CD4-positive, alpha-beta memory T cell (primary cell): ENCODE measurements at regions of chr6 and their contacts with region 1.

Region 1: DNA sequence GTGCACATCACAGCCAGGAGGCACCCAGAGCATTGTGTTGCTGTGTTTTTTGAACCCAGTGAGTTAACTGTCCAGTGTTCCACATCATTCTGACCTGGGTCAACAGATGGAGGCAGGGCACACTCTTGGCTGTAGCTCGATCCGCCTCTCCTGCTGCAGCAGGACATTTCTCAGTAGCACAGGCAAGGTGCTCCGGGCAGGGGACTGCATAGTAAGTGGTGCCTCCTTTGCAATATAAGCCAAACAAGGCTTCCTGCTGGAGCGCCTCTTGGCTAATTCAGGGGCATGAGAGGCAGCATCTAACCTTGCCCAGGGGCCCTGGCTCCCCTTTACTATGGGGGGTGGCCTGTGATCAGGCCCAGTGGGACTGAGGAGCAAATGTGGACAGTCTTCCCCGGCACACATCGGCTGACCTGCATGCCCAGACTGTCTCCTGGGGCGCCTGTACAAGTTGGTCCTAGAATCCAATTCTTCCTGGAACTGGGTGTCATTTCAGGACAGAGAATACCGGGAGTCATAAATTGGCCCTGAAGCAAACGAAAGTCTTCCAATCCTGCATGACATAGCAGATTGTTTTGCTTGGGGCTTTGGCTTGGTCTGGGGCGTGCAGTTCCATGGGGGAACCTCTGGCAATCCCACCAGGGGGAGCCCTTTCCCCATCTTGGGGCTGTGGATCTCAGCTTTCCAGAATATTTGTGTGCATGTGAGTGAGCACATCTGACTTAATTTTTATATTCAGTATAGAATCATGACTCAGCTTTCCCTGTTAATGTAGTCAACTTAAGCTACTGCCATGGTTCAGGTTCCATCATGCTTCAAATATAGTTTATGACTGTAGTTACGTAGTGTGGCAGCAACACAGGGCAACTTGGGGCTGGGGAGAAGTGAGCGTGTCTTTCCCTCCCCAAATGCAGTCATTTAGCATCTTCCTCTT is 56.0 kb upstream of the DDR1 start:
- DNase-seq: peak; percentile 71 to 77 (median 73)
- H3K4me3 ChIP-seq: peak overlapping the region; percentile 68 to 88
- H3K4me3 Mint-ChIP-seq: peak overlapping the region; percentile 91 to 98 (median 94)
- H3K27ac ChIP-seq: peak overlapping the region; percentile 70
- H3K27ac Mint-ChIP-seq: peak overlapping the region; percentile 72 to 99 (median 95)
- H3K4me1 ChIP-seq: peaks cover 78% of the 10 kb centered on the region
- H3K4me1 Mint-ChIP-seq: peaks cover 56 to 93% (median 72%) of the 10 kb centered on the region in 4 donors
- H3K27me3 ChIP-seq: no peaks in the 10 kb centered on the region
- H3K27me3 Mint-ChIP-seq: no peaks in the 10 kb centered on the region

Region 2: GRCh38 chr6:28929887-28930620 is 1898.2 kb before region 1 on chr6:
- CTCF ChIA-PET with region 1: no interaction called
- POLR2A ChIA-PET with region 1: no interaction called
- intact Hi-C with region 1: no loop called
- DNase-seq: no peak
- H3K4me3 ChIP-seq: no peak overlapping the region
- H3K4me3 Mint-ChIP-seq: no peak overlapping the region
- H3K27ac ChIP-seq: no peak overlapping the region
- H3K27ac Mint-ChIP-seq: peak overlapping the region in 2 of 7 donors; percentile 43 to 81
- H3K4me1 ChIP-seq: peaks cover 6% of the 10 kb centered on the region
- H3K4me1 Mint-ChIP-seq: peaks cover 0 to 3% (median under 1%) of the 10 kb centered on the region in 4 donors
- H3K27me3 ChIP-seq: peaks cover 6% of the 10 kb centered on the region
- H3K27me3 Mint-ChIP-seq: peaks cover 3 to 6% of the 10 kb centered on the region in 2 donors

Region 3: DNA sequence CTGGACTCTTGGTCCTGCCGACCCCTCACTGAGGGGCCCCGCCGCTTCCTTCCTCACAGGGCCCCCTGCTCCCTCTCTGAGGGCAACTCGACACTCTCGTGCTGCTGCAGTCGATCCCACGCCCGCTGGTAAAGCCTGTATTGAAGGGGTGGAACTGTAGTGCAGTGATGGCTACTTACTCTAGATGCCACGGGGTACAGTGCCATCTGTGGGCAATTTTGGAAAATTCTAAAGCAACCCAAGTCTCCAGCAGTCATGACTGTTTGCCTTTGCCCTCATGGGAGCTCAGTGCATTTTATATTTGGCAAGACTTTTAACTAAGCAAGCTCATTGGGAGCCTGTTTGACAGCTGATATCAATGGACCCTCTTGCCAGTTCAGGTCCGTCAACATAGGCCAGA is 187.8 kb before region 1 on chr6:
- CTCF ChIA-PET with region 1: no interaction called
- POLR2A ChIA-PET with region 1: no interaction called
- intact Hi-C with region 1: no loop called
- DNase-seq: no peak
- H3K4me3 ChIP-seq: no peak overlapping the region
- H3K4me3 Mint-ChIP-seq: no peak overlapping the region
- H3K27ac ChIP-seq: no peak overlapping the region
- H3K27ac Mint-ChIP-seq: no peak overlapping the region
- H3K4me1 ChIP-seq: no peaks in the 10 kb centered on the region
- H3K4me1 Mint-ChIP-seq: peaks cover 0 to 8% (median 5%) of the 10 kb centered on the region in 4 donors
- H3K27me3 ChIP-seq: no peaks in the 10 kb centered on the region
- H3K27me3 Mint-ChIP-seq: no peaks in the 10 kb centered on the region

Region 4: GRCh38 chr6:30742316-30743098 is 85.8 kb before region 1 on chr6 and contains the start of gene FLOT1:
- CTCF ChIA-PET with region 1: interaction called, 9 read pairs
- POLR2A ChIA-PET with region 1: interaction called, 19 read pairs
- intact Hi-C with region 1: loop called (anchors 1 kb)
- DNase-seq: peak; percentile 67 to 88 (median 68)
- H3K4me3 ChIP-seq: peak within 1 kb of the TSS; percentile 50 to 64
- H3K4me3 Mint-ChIP-seq: peak within 1 kb of the TSS; percentile 87 to 97 (median 91)
- H3K27ac ChIP-seq: peak within 1 kb of the TSS; percentile 63
- H3K27ac Mint-ChIP-seq: peak within 1 kb of the TSS; percentile 84 to 98 (median 93)
- H3K4me1 ChIP-seq: peaks cover 54% of the 10 kb centered on the region
- H3K4me1 Mint-ChIP-seq: peaks cover 44 to 75% (median 59%) of the 10 kb centered on the region in 4 donors
- H3K27me3 ChIP-seq: no peaks in the 10 kb centered on the region
- H3K27me3 Mint-ChIP-seq: no peaks in the 10 kb centered on the region
- total RNA-seq, gene FLOT1: 75.3 to 78.5 TPM

Region 5: DNA sequence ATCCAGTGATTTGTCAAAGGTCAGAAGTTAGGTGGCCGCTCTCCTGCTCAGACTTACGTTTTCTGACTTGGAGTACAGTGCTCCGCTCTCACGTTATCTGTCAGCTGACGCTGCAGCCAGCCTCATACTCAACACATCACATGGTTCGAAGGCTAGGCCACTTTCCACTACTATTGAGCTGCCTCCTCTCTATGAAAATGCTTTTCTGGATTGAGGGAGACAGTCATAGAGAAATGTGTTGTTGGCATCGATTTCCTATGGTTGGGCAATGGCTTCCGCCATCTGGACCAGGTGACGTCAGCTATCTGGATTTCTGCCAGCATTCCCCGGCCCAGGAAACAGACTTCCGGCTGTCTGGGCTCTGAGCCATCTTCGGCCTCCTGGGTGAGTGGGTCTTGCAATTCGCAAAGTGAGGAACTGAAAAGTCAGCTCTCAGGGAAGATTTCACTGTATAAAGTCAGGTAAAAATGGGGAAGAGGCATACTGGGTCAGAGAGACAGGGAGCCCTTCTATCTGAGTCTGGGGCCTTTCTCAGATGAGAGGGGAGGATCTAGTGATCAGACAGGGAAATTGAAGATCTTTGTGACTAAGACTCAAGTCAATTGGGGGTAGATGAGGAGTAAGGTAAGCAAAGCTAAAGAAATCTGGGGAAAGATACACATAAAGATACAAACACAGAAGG is 46.4 kb before region 1 on chr6:
- CTCF ChIA-PET with region 1: no interaction called
- POLR2A ChIA-PET with region 1: no interaction called
- intact Hi-C with region 1: no loop called
- DNase-seq: no peak
- H3K4me3 ChIP-seq: no peak overlapping the region
- H3K4me3 Mint-ChIP-seq: no peak overlapping the region
- H3K27ac ChIP-seq: no peak overlapping the region
- H3K27ac Mint-ChIP-seq: peak overlapping the region in 1 of 7 donors; percentile 89
- H3K4me1 ChIP-seq: peaks cover 11% of the 10 kb centered on the region
- H3K4me1 Mint-ChIP-seq: peaks cover 12 to 23% (median 20%) of the 10 kb centered on the region in 4 donors
- H3K27me3 ChIP-seq: no peaks in the 10 kb centered on the region
- H3K27me3 Mint-ChIP-seq: no peaks in the 10 kb centered on the region

Region 6: GRCh38 chr6:30793521-30794194 is 34.6 kb before region 1 on chr6:
- CTCF ChIA-PET with region 1: interaction called, 8 read pairs
- POLR2A ChIA-PET with region 1: interaction called, 12 read pairs
- intact Hi-C with region 1: no loop called
- DNase-seq: peak in 4 of 5 donors; percentile 51 to 62 (median 55)
- H3K4me3 ChIP-seq: peak overlapping the region in 1 of 2 donors; percentile 11
- H3K4me3 Mint-ChIP-seq: peak overlapping the region; percentile 43 to 79 (median 74)
- H3K27ac ChIP-seq: peak overlapping the region; percentile 40
- H3K27ac Mint-ChIP-seq: peak overlapping the region; percentile 88 to 97 (median 95)
- H3K4me1 ChIP-seq: peaks cover 41% of the 10 kb centered on the region
- H3K4me1 Mint-ChIP-seq: peaks cover 37 to 70% (median 49%) of the 10 kb centered on the region in 4 donors
- H3K27me3 ChIP-seq: no peaks in the 10 kb centered on the region
- H3K27me3 Mint-ChIP-seq: peaks cover 0 to 2% of the 10 kb centered on the region in 2 donors

Region 7: DNA sequence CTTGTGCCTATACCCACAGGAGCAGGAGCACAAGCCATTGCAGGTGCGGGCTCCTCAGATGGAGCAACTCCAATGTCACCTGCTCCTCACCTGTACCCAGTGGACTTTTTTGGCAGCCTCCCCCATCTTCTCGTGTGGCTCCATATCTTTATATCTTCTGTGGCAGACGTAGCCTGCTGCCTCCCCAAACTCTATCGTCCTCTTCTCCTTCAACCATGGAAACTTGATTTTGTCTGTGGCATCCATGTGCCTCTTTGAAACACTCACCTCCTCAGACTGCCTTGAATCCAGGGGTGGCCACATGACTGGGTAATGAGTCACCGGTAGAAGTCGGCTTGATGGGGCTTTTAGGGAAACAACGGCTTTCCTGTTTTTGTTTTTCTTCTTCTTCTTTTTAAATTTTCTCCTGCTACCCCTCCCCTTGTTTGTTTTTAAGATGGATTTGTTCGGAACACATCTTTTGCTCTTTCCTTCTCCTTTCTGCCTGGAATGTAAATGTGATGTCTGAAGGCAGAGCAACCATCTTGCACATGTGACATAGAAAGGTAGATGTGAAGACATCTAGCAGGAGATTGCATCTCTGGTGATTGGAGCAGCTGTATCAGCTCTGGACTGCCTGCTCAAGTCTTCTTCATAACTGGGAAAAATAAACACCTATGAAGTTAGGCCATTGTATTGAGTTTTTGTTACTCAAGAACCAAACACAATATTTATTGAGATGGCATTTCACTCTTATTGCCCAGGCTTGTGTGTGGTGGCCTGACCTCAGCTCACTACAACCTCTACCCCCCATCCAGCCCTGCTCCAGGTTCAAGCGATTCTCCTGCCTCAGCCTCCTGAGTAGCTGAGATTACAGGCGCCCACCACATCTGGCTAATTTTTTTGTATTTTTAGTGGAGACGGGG is 13.9 kb before region 1 on chr6:
- CTCF ChIA-PET with region 1: interaction called, 39 read pairs
- POLR2A ChIA-PET with region 1: interaction called, 6 read pairs
- intact Hi-C with region 1: no loop called
- DNase-seq: peak in 1 of 5 donors; percentile 70
- H3K4me3 ChIP-seq: no peak overlapping the region
- H3K4me3 Mint-ChIP-seq: peak overlapping the region in 7 of 8 donors; percentile 29 to 69 (median 56)
- H3K27ac ChIP-seq: no peak overlapping the region
- H3K27ac Mint-ChIP-seq: peak overlapping the region; percentile 7 to 92 (median 75)
- H3K4me1 ChIP-seq: peaks cover 58% of the 10 kb centered on the region
- H3K4me1 Mint-ChIP-seq: peaks cover 50 to 80% (median 65%) of the 10 kb centered on the region in 4 donors
- H3K27me3 ChIP-seq: no peaks in the 10 kb centered on the region
- H3K27me3 Mint-ChIP-seq: no peaks in the 10 kb centered on the region

Region 8: DNA sequence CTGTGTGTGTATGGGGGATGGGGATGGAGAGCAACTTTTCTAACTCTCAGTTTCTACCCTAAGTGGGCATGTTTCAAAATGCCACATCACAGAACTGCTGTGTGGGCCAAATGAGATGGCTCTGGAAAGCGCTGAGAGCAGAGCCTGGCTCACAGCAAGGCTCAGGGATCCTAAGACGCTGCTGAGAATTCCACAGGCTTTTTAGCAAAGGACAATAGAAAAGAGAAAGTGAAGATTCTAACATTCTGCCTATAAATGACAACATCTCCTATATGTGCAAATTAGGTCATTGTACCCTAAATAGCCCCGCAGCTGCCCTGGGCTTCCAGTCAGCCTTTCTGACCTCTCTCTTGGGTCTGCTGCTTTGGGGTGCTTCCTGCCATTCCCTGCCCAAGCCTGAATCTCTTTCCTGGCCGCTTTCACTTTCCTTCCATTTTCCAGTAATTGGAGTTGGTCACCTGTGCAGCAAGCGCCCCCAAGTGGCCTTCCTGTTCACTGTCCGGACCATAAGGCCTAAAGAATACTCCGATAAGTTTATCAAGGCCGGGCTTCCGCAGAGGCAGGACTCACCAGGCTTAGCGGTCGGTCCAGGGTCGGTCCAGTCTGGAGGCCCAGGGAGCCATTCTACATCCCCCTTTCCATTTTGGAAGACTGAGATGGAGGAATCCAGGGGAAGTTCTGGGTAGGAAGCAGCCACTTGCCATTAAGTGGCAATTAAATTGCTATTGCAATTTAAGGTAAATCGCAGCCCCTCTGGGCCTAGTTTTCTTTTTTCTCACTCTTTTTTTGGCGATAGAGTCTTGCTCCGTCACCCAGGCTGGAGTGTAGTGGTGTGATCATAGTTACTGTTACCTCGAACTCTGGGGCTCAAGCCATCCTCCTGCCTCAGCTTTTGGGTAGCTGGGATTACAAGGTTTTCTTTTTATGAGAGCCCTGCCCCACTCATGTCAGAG is 49.4 kb after region 1 on chr6:
- CTCF ChIA-PET with region 1: interaction called, 262 read pairs
- POLR2A ChIA-PET with region 1: interaction called, 35 read pairs
- intact Hi-C with region 1: loop called (anchors 1 kb)
- DNase-seq: peak; percentile 62 to 71 (median 68)
- H3K4me3 ChIP-seq: peak overlapping the region; percentile 40 to 43
- H3K4me3 Mint-ChIP-seq: peak overlapping the region; percentile 61 to 91 (median 82)
- H3K27ac ChIP-seq: no peak overlapping the region
- H3K27ac Mint-ChIP-seq: peak overlapping the region in 6 of 7 donors; percentile 21 to 91 (median 72)
- H3K4me1 ChIP-seq: peaks cover 10% of the 10 kb centered on the region
- H3K4me1 Mint-ChIP-seq: peaks cover 7 to 27% (median 11%) of the 10 kb centered on the region in 4 donors
- H3K27me3 ChIP-seq: no peaks in the 10 kb centered on the region
- H3K27me3 Mint-ChIP-seq: no peaks in the 10 kb centered on the region

Region 9: GRCh38 chr6:30914076-30914853 is 86.0 kb after region 1 on chr6 and contains the start of gene VARS2:
- CTCF ChIA-PET with region 1: interaction called, 13 read pairs
- POLR2A ChIA-PET with region 1: interaction called, 9 read pairs
- intact Hi-C with region 1: loop called (anchors 1 kb)
- DNase-seq: peak; percentile 86 to 92 (median 89)
- H3K4me3 ChIP-seq: peak within 1 kb of the TSS; percentile 70 to 94
- H3K4me3 Mint-ChIP-seq: peak within 1 kb of the TSS; percentile 89 to 96 (median 95)
- H3K27ac ChIP-seq: peak within 1 kb of the TSS; percentile 77
- H3K27ac Mint-ChIP-seq: peak within 1 kb of the TSS; percentile 83 to 98 (median 94)
- H3K4me1 ChIP-seq: peaks cover 21% of the 10 kb centered on the region
- H3K4me1 Mint-ChIP-seq: peaks cover 24 to 47% (median 34%) of the 10 kb centered on the region in 4 donors
- H3K27me3 ChIP-seq: no peaks in the 10 kb centered on the region
- H3K27me3 Mint-ChIP-seq: no peaks in the 10 kb centered on the region
- total RNA-seq, gene VARS2: 34.9 to 37.8 TPM